T-cell (primary cell): ENCODE measurements at regions of chr14 and their contacts with region 1.

Region 1: GRCh38 chr14:31127690-31128089 is 79.9 kb downstream of the HECTD1 start:
- DNase-seq: peak in 22 of 35 experiments; percentile 7 to 86 (median 28)
- ATAC-seq: peak; percentile 67 to 83 (median 72)
- H3K4me3 ChIP-seq: no peak overlapping the region
- H3K4me3 Mint-ChIP-seq: peak overlapping the region in 1 of 3 donors; percentile 0
- H3K27ac ChIP-seq: peak overlapping the region; percentile 82
- H3K27ac Mint-ChIP-seq: peak overlapping the region; percentile 45 to 73
- H3K4me1 ChIP-seq: peaks cover 13 to 35% of the 10 kb centered on the region in 2 experiments
- H3K4me1 Mint-ChIP-seq: peaks cover 38 to 56% (median 56%) of the 10 kb centered on the region in 3 donors
- H3K27me3 ChIP-seq: no peaks in the 10 kb centered on the region
- H3K27me3 Mint-ChIP-seq: no peaks in the 10 kb centered on the region

Region 2: DNA sequence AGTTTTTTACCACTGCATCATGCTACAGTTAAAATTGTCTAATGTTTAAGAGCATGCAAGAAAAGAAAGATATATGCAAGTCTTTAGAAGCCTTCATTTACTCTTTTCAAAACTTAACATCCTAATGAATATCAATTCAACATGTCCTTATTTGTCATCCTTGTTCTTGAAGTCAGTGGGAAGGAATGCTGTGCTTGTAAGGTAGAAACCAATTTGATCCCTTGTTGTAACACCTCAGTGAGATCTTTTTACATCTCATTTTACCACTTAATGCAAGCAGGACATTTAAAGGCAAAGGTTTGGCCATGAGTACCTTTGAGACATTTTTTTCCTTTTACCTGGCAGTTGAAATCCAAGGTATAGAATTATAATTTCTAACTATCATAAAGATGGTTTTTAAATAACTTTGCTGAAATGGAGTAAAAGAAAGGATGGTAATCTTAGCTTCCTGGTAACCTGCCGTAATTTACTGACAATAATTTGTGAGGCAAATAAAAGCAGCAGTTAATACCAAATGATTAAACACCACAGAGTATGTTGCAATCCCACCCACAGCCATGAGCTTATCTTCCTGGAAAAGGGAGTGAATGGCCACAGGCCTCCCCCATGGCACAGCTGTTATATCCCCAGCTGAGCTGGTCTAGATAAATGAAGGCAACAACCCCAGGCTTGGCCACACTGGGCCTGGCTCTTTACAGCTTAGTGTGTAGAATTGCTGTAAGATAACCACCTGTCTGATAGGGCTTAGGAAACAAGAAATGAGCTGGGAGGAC is 68.4 kb before region 1 on chr14:
- CTCF ChIA-PET with region 1: no interaction called
- POLR2A ChIA-PET with region 1: no interaction called
- DNase-seq: no peak
- ATAC-seq: no peak
- H3K4me3 ChIP-seq: no peak overlapping the region
- H3K4me3 Mint-ChIP-seq: no peak overlapping the region
- H3K27ac ChIP-seq: no peak overlapping the region
- H3K27ac Mint-ChIP-seq: no peak overlapping the region
- H3K4me1 ChIP-seq: no peaks in the 10 kb centered on the region
- H3K4me1 Mint-ChIP-seq: peaks cover 12 to 16% (median 14%) of the 10 kb centered on the region in 3 donors
- H3K27me3 ChIP-seq: no peaks in the 10 kb centered on the region
- H3K27me3 Mint-ChIP-seq: no peaks in the 10 kb centered on the region

Region 3: DNA sequence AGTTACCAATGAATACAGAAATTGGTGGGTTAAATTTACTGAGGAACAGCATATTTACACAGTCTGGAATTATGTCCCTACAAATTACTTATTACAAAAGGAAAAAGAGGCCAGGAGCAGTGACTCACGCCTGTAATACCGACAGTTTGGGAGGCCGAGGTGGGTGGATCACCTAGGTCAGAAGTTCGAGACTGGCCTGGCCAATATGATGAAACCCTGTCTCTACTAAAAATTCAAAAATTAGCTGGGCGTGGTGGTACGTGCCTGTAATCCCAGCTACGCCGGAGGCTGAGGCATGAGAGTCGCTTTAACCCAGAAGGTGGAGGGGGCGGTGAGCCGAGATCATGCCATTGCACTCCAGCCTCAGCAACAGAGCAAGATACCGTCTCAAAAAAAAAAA is 27.3 kb after region 1 on chr14:
- CTCF ChIA-PET with region 1: interaction called in 1 of 2 experiments, 11 read pairs
- POLR2A ChIA-PET with region 1: no interaction called
- DNase-seq: no peak
- ATAC-seq: no peak
- H3K4me3 ChIP-seq: no peak overlapping the region
- H3K4me3 Mint-ChIP-seq: no peak overlapping the region
- H3K27ac ChIP-seq: no peak overlapping the region
- H3K27ac Mint-ChIP-seq: no peak overlapping the region
- H3K4me1 ChIP-seq: no peaks in the 10 kb centered on the region
- H3K4me1 Mint-ChIP-seq: no peaks in the 10 kb centered on the region
- H3K27me3 ChIP-seq: no peaks in the 10 kb centered on the region
- H3K27me3 Mint-ChIP-seq: no peaks in the 10 kb centered on the region

Region 4: DNA sequence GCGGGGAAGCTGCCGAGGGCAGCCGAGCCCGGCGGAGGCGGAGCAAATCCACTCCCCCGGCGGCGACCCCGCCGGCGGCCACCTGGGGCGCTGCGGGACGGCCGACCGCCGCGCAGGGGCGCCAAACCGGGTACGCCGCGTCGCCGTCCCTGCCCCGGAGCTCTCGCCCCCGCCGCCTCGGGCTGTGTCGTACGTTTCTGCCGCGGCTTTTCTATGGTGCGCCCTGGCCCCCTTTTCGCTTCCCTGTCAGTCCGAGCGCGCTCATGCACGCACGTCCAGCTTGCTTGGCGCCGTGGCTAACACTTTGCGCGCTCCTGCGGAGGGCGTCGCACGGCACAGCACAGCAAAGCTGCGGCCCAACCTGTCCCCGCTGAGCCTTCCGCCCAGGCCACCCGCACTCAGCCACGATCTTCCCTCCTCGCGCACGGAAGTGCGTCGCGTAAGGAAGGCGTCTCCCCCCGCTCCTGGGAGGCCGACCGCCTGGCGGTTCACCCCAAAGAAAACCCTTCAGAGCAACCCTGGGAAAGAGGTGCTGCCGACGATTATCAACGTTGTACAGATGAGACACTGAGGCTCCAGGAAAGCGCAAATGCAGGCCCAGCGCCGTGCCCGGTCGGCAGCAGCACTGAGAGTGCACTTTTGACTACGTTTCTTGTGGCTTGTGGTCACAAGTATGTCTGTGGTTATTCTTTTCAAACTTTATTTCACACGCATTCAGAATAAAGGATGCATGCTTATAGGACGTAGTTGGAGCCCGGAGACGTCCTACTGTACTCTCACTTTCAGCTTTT is 80.3 kb after region 1 on chr14 and contains the start of gene HECTD1:
- CTCF ChIA-PET with region 1: interaction called in 1 of 2 experiments, 13 read pairs
- POLR2A ChIA-PET with region 1: interaction called in 1 of 2 experiments, 15 read pairs
- DNase-seq: peak in 34 of 35 experiments; percentile 78 to 95 (median 87)
- ATAC-seq: peak; percentile 75 to 84 (median 79)
- H3K4me3 ChIP-seq: peak within 1 kb of the TSS; percentile 75 to 90
- H3K4me3 Mint-ChIP-seq: peak within 1 kb of the TSS; percentile 91 to 96 (median 92)
- H3K27ac ChIP-seq: peak within 1 kb of the TSS; percentile 96
- H3K27ac Mint-ChIP-seq: peak within 1 kb of the TSS; percentile 99
- H3K4me1 ChIP-seq: peaks cover 23 to 33% of the 10 kb centered on the region in 2 experiments
- H3K4me1 Mint-ChIP-seq: peaks cover 50 to 65% (median 63%) of the 10 kb centered on the region in 3 donors
- H3K27me3 ChIP-seq: no peaks in the 10 kb centered on the region
- H3K27me3 Mint-ChIP-seq: no peaks in the 10 kb centered on the region
- total RNA-seq, gene HECTD1: 118 to 194 (median 132) TPM